GM23248 (cell line): ENCODE measurements at regions of chr6 and their contacts with region 1.

Region 1: DNA sequence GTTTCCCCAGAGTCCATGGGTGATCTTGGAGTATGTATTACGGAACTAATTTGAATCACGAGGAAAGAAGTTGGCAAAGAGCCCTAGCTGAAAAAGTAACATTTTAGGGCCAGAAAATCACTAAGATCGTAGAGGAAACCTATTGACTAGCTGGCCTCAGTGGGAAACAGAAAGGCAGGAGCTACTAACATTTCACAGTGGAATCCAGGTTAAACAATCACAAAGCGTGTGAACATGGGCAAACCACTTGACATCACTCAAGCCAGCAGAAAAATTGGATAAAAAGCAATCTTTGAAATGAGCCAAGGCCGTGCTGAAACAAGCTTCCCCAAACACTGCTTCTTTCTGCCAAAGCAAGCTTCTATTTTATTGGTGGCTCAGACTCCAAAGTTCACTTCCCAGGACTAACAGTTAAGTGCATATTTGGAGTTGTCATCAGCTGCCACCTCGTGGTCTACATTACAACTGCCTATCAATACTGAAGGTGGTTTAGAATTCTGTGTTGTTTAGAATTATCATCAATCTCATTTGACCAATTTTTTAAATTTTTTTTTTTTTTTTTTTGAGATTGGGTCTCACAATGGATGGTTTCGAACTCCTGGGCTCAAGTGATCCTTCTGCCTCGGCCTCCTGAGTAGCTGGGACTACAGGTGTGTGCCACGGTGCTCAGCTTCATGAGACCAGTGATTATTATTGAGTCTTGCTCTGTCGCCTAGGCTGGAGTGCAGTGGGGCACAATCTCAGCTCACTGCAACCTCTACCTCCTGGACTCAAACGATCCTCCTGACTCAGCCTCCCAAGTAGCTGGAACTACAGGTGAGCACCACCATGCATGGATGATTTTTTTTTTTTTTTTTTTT is 10.6 kb downstream of the RPS10 start:
- DNase-seq: peak; percentile 79
- H3K4me3 ChIP-seq: no peak overlapping the region
- H3K27ac ChIP-seq: 0 out of 2 replicates have a peak overlapping the region, but pooled peaks have one; percentile 5
- H3K4me1 ChIP-seq: no peaks in the 10 kb centered on the region
- H3K27me3 ChIP-seq: no peaks in the 10 kb centered on the region

Region 2: GRCh38 chr6:34182751-34183531 is 232.3 kb before region 1 on chr6:
- in situ Hi-C with region 1: loop called (anchors 10 kb)
- DNase-seq: no peak
- H3K4me3 ChIP-seq: no peak overlapping the region
- H3K27ac ChIP-seq: no peak overlapping the region
- H3K4me1 ChIP-seq: no peaks in the 10 kb centered on the region
- H3K27me3 ChIP-seq: no peaks in the 10 kb centered on the region